Uterus (tissue), 4 donors: ENCODE measurements at regions of chr10 and their contacts with region 1.

Region 1: GRCh38 chr10:115129752-115130151 is 36.6 kb downstream of the ATRNL1 start:
- DNase-seq: no peak
- H3K4me3 ChIP-seq: no peak overlapping the region
- H3K27ac ChIP-seq: no peak overlapping the region
- H3K4me1 ChIP-seq: no peaks in the 10 kb centered on the region
- H3K27me3 ChIP-seq: peaks cover 0 to 3% of the 10 kb centered on the region in 2 donors
- CTCF ChIP-seq: peak; percentile 26 to 50 (median 42)
- POLR2A ChIP-seq: no peak

Region 2: GRCh38 chr10:114876602-114877300 is 253.0 kb before region 1 on chr10:
- intact Hi-C with region 1: loop called (anchors 10 kb)
- DNase-seq: peak; percentile 71 to 77
- H3K4me3 ChIP-seq: no peak overlapping the region
- H3K27ac ChIP-seq: no peak overlapping the region
- H3K4me1 ChIP-seq: peaks cover 0 to 3% of the 10 kb centered on the region in 2 donors
- H3K27me3 ChIP-seq: no peaks in the 10 kb centered on the region
- CTCF ChIP-seq: peak; percentile 68 to 87 (median 73)
- POLR2A ChIP-seq: no peak

Region 3: DNA sequence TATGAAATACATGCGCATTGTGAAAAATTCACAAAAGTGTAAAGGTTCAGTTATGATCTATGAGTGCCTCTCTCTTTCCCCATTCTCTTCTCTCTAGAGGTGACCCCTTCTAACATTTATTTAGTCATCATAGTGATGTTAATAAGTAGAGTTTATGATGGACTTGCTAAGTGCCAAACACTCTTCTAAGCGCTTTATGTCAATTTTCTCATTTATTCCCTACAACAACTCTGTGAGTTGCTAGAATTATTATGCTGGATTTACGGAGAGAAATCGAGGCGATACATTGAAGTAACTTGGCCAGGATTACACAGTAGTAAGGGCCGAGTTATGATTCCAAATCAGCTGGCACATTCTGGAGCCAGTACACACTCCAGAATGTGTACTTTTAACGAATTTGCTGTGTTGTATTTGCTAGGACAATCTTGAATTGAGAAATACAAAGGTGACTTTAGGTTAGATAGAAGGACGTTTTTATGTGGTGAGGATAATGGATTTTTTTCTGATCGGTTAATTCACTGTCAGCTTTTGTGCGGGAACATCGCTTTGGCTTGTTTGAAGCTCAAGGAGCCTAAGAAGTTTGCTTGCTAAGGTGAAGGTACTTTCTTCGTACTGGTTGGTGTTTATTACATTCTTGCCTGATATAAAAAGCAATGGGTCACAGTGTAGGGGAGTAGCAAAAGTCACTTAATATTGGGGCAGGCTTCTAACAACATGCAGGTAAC is 35.2 kb before region 1 on chr10:
- intact Hi-C with region 1: no loop called
- DNase-seq: no peak
- H3K4me3 ChIP-seq: peak overlapping the region; percentile 69 to 96
- H3K27ac ChIP-seq: peak overlapping the region; percentile 94 to 95
- H3K4me1 ChIP-seq: peaks cover 0 to 2% of the 10 kb centered on the region in 2 donors
- H3K27me3 ChIP-seq: no peaks in the 10 kb centered on the region
- CTCF ChIP-seq: no peak
- POLR2A ChIP-seq: no peak